IMR-90 (cell line): ENCODE measurements at regions of chr5 and their contacts with region 1.

Region 1: DNA sequence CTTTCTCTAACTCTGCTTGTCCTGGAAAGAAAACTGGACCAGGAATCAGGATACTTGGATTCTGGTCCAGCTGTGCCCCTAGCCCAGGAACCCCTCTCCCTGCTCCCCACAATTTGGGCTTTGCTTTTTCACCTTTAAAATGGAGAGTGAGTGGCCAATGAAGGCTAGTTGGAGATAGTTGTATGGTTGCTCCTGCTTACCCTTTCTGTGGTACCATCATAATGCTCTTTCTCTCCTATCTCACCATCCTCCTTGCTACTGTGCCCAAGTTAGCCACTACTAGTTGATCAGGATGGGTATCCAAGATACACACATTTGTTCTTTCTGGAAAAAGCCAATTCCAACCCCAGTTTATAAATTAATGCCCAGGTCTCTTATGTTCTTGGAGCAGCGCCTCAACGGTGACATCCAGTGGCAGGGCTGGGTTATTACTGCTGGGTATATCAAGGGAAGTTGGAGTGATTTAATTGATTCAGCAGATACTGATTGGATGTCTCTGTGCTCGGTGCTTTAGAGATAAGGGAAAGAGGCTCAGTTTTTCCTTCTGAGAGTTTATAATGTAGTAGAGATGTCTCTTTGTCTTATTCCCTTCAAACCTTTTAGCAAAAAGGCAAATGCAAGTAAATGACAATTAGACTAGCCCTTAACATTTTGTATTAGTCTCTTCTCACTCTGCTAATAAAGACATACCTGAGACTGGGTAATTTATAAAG is 38.6 kb downstream of the FAXDC2 start:
- DNase-seq: peak; percentile 76
- ATAC-seq: peak; percentile 93
- H3K4me3 ChIP-seq: no peak overlapping the region
- H3K27ac ChIP-seq: no peak overlapping the region
- H3K4me1 ChIP-seq: no peaks in the 10 kb centered on the region
- H3K27me3 ChIP-seq: no peaks in the 10 kb centered on the region
- CTCF ChIP-seq: peak; percentile 92
- POLR2A ChIP-seq: no peak
- RAD21 ChIP-seq: peak; percentile 90

Region 2: GRCh38 chr5:154467655-154468354 is 344.0 kb before region 1 on chr5:
- CTCF ChIA-PET with region 1: interaction called, 4 read pairs
- POLR2A ChIA-PET with region 1: no interaction called
- dilution Hi-C with region 1: no loop called
- in situ Hi-C with region 1: loop called (anchors 25 kb)
- intact Hi-C with region 1: loop called (anchors 5 kb)
- DNase-seq: peak; percentile 53
- ATAC-seq: peak; percentile 92
- H3K4me3 ChIP-seq: no peak overlapping the region
- H3K27ac ChIP-seq: no peak overlapping the region
- H3K4me1 ChIP-seq: peaks cover 2% of the 10 kb centered on the region; the same call in 1 of the 2 replicates
- H3K27me3 ChIP-seq: peaks cover 30% of the 10 kb centered on the region
- CTCF ChIP-seq: peak; percentile 85
- POLR2A ChIP-seq: no peak
- RAD21 ChIP-seq: peak; percentile 76

Region 3: GRCh38 chr5:154647114-154647760 is 164.6 kb before region 1 on chr5:
- CTCF ChIA-PET with region 1: interaction called, 5 read pairs
- POLR2A ChIA-PET with region 1: no interaction called
- dilution Hi-C with region 1: no loop called
- in situ Hi-C with region 1: no loop called
- intact Hi-C with region 1: loop called (anchors 1 kb)
- DNase-seq: peak; percentile 12
- ATAC-seq: peak; percentile 25; the same call in 1 of the 2 replicates
- H3K4me3 ChIP-seq: no peak overlapping the region
- H3K27ac ChIP-seq: no peak overlapping the region
- H3K4me1 ChIP-seq: no peaks in the 10 kb centered on the region
- H3K27me3 ChIP-seq: peaks cover 5% of the 10 kb centered on the region
- CTCF ChIP-seq: no peak
- POLR2A ChIP-seq: no peak
- RAD21 ChIP-seq: no peak

Region 4: DNA sequence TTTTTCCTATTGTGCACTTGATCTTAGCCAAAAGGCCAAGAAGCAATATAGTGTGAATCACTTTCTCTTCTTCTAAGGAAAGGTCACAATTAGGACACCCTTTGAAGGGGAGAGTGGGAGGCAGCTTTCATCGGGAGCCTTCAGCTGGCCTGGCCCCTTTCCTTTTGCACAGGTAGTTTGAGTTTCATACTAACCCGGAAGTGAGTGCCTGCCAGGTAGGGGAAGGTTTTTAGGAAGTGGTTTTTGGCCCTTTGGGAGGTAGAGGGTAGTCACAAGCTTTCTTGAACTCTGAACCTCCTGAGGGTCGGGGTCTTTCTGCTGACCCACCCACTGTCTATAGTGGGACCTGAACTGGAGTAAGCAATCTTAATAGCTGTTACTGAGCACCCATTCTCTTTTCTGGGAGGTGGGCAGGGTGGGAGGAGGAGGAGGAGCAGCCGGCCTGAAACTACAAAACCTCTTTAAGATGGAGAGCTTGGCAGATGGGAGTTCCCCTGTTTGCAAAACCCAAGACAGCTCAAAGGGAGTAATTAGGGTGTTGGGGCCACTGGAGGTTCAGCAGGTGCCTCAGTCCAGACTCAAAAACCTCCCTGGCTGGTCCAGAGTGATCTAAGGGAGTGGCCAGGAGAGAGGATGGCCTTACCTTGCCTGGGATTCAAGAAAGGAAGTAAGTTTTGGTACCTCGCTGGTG is 50.6 kb before region 1 on chr5:
- CTCF ChIA-PET with region 1: no interaction called
- POLR2A ChIA-PET with region 1: interaction called, 11 read pairs
- dilution Hi-C with region 1: no loop called
- in situ Hi-C with region 1: no loop called
- intact Hi-C with region 1: loop called (anchors 2 kb)
- DNase-seq: no peak
- ATAC-seq: no peak
- H3K4me3 ChIP-seq: no peak overlapping the region
- H3K27ac ChIP-seq: no peak overlapping the region
- H3K4me1 ChIP-seq: peaks cover 16% of the 10 kb centered on the region
- H3K27me3 ChIP-seq: no peaks in the 10 kb centered on the region
- CTCF ChIP-seq: no peak
- POLR2A ChIP-seq: no peak
- RAD21 ChIP-seq: no peak